ENCODE measurements at regions of chr19 and their contacts with region 1.

Region 1: GRCh38 chr19:58346961-58347931 is 6.0 kb downstream of the A1BG start:
- DNase-seq: no peak
- H3K4me3 ChIP-seq: no peak overlapping the region
- H3K27ac ChIP-seq: no peak overlapping the region
- H3K4me1 ChIP-seq: no peaks in the 10 kb centered on the region
- H3K27me3 ChIP-seq: no peaks in the 10 kb centered on the region
- CTCF ChIP-seq: no peak

Region 2: DNA sequence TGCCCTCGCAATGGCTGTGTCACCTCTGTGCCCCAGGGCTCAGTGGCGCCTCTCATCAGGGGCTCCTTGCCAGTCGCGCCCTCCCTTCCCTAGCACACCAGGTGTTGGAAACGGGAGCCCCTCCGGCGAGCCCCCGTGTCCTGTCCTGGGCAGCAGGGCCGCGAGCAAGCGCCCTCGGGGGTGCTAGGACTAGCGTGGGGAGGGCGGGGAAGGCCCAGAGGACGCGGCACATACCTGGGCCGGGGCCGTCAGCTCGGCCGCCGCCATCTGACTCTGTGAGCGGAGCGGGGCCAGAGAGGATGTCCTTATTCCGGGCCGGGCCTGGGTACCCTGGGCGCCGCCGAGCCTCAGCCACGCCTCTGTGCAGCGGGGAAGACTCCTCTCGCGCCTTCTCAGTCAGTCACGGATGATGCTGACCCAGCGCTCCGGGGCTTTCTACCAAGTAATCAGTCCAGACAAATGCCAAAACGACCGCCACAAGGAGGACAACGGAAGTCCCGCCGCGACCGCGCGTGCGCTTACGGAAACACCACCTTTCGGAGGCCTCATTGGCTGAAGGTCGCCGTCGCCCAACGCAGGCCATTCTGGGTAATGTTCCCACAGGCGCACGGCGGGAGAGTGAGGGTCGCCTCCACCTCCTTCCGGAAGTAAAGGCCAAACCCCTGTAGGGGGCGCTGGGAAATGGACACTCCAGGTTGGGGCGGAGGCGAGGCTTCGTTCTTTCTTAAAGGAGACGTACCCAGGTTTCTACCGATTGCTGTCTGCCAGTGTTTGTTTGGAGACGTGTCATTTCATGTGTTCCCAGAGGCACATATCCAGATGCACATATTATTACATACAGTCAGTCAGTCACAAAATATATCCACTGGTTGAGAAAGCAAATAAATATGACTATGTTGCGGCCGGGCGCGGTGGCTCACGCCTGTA is 399.8 kb before region 1 on chr19 and contains the start of gene ZNF256:
- CTCF ChIA-PET with region 1: no interaction called
- POLR2A ChIA-PET with region 1: no interaction called
- intact Hi-C with region 1: no loop called
- DNase-seq: peak; percentile 86 to 96
- H3K4me3 ChIP-seq: peak within 1 kb of the TSS; percentile 91
- H3K27ac ChIP-seq: peak within 1 kb of the TSS; percentile 35; the same call in 1 of the 2 replicates
- H3K4me1 ChIP-seq: peaks cover 9% of the 10 kb centered on the region
- H3K27me3 ChIP-seq: 0 out of 2 replicates have a peak, but pooled peaks cover 4% of the 10 kb centered on the region
- CTCF ChIP-seq: peak; percentile 63
- total RNA-seq, gene ZNF256: 6.3 and 6.4 TPM in 2 replicates

Region 3: GRCh38 chr19:58296104-58296503 is 51.1 kb before region 1 on chr19:
- CTCF ChIA-PET with region 1: no interaction called
- POLR2A ChIA-PET with region 1: no interaction called
- intact Hi-C with region 1: no loop called
- DNase-seq: no peak
- H3K4me3 ChIP-seq: no peak overlapping the region
- H3K27ac ChIP-seq: no peak overlapping the region
- H3K4me1 ChIP-seq: no peaks in the 10 kb centered on the region
- H3K27me3 ChIP-seq: no peaks in the 10 kb centered on the region
- CTCF ChIP-seq: no peak

Region 4: DNA sequence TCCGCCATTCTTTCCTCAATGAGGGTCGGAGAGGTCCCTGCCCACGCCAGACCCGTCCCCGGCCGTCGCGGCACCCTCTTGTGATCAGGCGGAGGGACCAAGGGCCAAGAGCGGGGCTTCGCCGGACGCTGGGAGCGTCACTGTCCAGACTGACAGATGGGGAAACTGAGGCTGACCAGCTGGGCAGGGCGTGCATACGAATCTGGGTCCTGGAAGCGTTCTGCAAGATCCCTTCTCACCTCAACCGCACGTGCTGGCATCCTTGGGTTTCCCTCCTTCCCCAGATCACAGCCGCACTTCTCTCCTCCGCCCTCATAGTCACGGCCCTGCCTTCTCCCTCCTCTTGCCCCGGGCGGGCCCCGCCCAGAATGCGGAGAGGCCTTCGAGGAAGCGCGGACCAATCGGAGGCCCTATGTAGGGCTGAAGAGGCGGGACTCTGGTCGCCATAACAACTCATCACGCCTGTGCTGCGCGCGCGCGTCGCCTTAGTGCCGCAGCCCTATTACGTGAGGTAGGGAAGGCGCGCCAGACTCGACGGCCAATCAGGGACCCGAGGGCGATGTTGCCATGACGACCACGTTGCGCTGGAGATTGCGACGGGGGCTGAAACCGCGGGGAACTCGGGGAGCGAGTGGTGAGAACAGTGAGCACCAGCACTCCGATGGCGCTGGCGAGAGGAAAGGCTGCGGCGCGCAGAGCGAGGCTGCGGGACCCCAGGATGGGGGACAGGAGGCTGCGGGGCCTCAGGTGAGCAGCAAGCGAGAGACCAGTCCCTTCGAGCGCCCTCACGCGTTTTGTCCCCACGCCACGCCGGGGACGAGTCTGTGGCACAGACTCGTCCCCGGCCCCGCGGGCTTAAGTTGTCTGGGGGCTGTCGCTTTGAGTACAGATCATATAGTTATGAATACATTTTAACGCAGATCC is 53.9 kb after region 1 on chr19:
- CTCF ChIA-PET with region 1: no interaction called
- POLR2A ChIA-PET with region 1: interaction called, 12 read pairs
- intact Hi-C with region 1: no loop called
- DNase-seq: peak; percentile 94 to 98
- H3K4me3 ChIP-seq: peak overlapping the region; percentile 72
- H3K27ac ChIP-seq: no peak overlapping the region
- H3K4me1 ChIP-seq: peaks cover 5% of the 10 kb centered on the region
- H3K27me3 ChIP-seq: no peaks in the 10 kb centered on the region
- CTCF ChIP-seq: no peak

Region 5: GRCh38 chr19:58416604-58417003 is 69.4 kb after region 1 on chr19:
- CTCF ChIA-PET with region 1: no interaction called
- POLR2A ChIA-PET with region 1: no interaction called
- intact Hi-C with region 1: no loop called
- DNase-seq: no peak
- H3K4me3 ChIP-seq: no peak overlapping the region
- H3K27ac ChIP-seq: no peak overlapping the region
- H3K4me1 ChIP-seq: no peaks in the 10 kb centered on the region
- H3K27me3 ChIP-seq: no peaks in the 10 kb centered on the region
- CTCF ChIP-seq: no peak

Region 6: DNA sequence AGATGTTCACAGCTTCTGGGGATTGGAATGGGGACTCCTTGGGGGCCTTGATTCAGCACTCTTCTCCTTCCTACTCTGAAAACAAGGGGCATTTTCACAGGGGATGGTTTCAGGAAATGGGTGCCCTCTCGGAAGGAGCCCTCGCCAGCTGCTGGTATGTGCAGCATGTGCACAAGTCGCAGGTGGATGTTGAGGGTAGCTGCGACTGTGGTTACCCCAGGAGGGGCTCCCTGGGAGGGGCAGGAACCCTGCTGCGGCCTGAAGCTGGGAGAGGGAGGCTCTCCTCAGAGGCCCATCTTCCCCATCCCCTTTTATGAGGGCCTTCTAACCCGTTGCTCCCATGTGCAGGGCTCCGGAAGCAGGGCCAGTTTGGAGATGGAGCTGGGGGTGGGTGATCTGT is 135.1 kb after region 1 on chr19:
- CTCF ChIA-PET with region 1: no interaction called
- POLR2A ChIA-PET with region 1: no interaction called
- intact Hi-C with region 1: no loop called
- DNase-seq: no peak
- H3K4me3 ChIP-seq: no peak overlapping the region
- H3K27ac ChIP-seq: no peak overlapping the region
- H3K4me1 ChIP-seq: peaks cover 5% of the 10 kb centered on the region; the same call in 1 of the 2 replicates
- H3K27me3 ChIP-seq: no peaks in the 10 kb centered on the region
- CTCF ChIP-seq: no peak